Activated B cell treated with CpG ODN at 0.5 μM for 24 hours (primary cell): ENCODE measurements at regions of chr17 and their contacts with region 1.

Region 1: DNA sequence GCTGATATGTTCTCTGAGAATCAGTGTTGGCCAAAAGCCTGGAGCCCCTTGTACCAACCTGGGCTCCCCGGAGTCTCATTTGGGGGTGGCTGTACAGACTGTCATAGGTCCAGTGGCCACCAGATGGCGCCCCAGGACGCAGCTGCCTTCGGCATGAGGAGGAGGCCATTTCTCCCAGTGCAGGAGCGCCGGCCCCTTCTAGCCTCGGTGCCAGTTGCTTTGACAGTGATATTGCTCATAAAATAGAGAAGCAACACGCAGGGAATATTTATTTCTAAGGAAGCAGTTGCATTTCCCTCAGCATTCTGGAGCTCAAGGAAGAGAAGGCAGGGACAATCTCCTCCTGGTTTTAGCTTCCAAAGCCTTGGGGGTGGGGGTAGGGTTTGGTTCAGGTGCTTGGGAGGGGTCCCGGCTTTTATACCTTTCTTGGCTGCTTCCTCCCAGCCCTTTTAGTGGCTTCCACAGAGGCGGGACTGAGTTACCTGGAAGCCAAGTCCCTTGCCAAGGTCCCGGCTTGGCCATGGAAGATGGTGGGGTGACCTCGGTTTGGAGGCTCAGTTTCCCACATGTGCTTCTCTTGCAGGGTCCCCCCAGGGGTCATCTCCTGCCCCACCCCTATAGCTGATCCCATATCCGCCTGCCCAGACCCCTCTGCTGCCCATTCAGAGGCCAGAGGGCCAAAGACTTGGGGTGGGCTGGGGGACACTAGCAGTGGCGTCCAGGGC is 117.8 kb upstream of the CDC42EP4 start:
- DNase-seq: peak; percentile 80
- ATAC-seq: peak; percentile 97
- H3K4me3 Mint-ChIP-seq: no peak overlapping the region
- H3K27ac Mint-ChIP-seq: no peak overlapping the region
- H3K4me1 Mint-ChIP-seq: peaks cover 10% of the 10 kb centered on the region
- H3K27me3 Mint-ChIP-seq: peaks cover 2% of the 10 kb centered on the region
- CTCF ChIP-seq: peak; percentile 97

Region 2: GRCh38 chr17:73586921-73587602 is 157.5 kb after region 1 on chr17:
- CTCF ChIA-PET with region 1: interaction called, 7 read pairs
- POLR2A ChIA-PET with region 1: interaction called, 3 read pairs
- intact Hi-C with region 1: loop called (anchors 2 kb)
- DNase-seq: no peak
- ATAC-seq: no peak
- H3K4me3 Mint-ChIP-seq: peak overlapping the region; percentile 3
- H3K27ac Mint-ChIP-seq: peak overlapping the region; percentile 90
- H3K4me1 Mint-ChIP-seq: peaks cover 79% of the 10 kb centered on the region
- H3K27me3 Mint-ChIP-seq: no peaks in the 10 kb centered on the region
- CTCF ChIP-seq: no peak

Region 3: GRCh38 chr17:73710095-73710592 is 280.5 kb after region 1 on chr17:
- CTCF ChIA-PET with region 1: interaction called, 102 read pairs
- POLR2A ChIA-PET with region 1: no interaction called
- intact Hi-C with region 1: loop called (anchors 1 kb)
- DNase-seq: no peak
- ATAC-seq: peak; percentile 47
- H3K4me3 Mint-ChIP-seq: peak overlapping the region; percentile 1
- H3K27ac Mint-ChIP-seq: no peak overlapping the region
- H3K4me1 Mint-ChIP-seq: peaks cover 27% of the 10 kb centered on the region
- H3K27me3 Mint-ChIP-seq: peaks cover 10% of the 10 kb centered on the region
- CTCF ChIP-seq: peak; percentile 27

Region 4: DNA sequence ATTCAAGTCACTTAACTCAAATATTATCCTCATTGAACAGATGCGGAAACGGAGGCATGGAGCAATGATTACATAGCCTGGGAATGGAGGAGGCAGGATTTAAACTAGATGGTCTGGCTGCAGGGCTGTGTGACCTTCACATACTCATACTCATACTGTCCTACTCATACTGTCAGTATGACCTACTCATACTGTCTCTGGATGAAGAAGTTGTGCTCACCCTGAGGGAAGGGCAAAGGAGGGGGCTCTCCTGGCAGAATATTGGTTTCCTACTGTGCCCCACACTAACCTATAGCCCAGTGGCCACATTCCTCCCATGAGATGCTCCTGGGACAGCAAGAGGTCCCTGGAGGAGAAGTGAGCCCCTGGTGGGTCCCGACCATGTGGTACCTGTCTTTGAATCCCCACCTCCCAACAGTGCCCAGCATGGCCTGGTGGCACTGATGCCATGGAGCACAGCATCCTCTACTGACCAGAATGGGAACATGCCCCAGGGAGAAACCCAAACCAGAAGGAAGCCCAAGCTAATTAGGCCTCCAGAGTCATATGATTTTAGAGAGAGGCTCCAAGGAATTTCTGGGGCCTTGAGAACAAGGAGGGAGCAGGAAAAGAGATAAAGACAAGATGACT is 411.9 kb after region 1 on chr17:
- CTCF ChIA-PET with region 1: interaction called, 4 read pairs
- POLR2A ChIA-PET with region 1: no interaction called
- intact Hi-C with region 1: loop called (anchors 2 kb)
- DNase-seq: no peak
- ATAC-seq: no peak
- H3K4me3 Mint-ChIP-seq: no peak overlapping the region
- H3K27ac Mint-ChIP-seq: no peak overlapping the region
- H3K4me1 Mint-ChIP-seq: no peaks in the 10 kb centered on the region
- H3K27me3 Mint-ChIP-seq: peaks cover 9% of the 10 kb centered on the region
- CTCF ChIP-seq: no peak

Region 5: DNA sequence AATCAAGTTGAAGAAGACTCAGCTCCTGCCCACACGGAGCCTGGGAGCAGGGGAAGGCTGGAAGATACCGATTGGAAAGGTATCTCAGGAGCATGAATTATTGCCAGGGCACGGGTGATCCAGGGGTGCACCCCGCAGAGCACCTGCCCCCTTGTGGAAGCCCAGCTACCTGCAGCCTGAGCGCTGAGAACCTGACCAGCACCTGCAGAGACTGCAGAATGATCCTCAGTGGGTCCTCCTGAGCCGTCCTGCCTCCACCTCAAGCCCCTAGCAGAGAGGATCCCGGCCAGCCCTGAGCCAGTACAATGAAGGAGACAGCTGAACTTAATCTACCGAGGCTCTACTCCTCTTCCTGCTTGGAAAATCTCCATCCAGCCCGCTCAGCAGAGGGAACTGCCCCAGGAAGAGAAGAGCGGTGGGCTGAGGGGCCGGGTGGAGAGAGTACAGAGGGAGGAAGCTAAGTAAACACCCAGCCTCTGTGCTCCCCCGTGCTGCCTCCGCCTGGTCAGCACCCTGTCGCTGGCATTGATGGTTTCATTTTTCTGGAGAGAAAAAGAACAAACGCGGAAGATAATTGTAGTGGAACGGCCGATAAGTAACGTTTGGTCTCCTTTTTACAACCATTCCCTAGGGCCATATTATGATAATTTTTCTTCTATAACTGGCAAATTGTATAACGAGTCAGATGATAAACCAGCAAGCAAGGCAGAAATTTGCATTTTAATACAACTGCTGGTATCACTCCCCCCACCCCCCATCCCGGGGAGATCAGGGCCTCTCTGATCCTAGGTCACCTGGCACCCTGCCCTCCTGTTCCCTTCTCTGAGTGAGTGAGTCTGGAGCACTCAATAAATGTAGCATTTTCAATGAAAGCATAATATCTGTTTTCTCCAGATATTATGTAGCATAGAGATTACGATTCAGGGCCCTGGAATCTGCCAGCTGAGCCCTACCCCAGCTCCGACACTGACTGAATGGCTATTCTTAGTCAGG is 569.3 kb after region 1 on chr17:
- CTCF ChIA-PET with region 1: interaction called, 22 read pairs
- POLR2A ChIA-PET with region 1: no interaction called
- intact Hi-C with region 1: no loop called
- DNase-seq: peak; percentile 30
- ATAC-seq: peak; percentile 34
- H3K4me3 Mint-ChIP-seq: no peak overlapping the region
- H3K27ac Mint-ChIP-seq: no peak overlapping the region
- H3K4me1 Mint-ChIP-seq: no peaks in the 10 kb centered on the region
- H3K27me3 Mint-ChIP-seq: peaks cover 14% of the 10 kb centered on the region
- CTCF ChIP-seq: no peak

Region 6: DNA sequence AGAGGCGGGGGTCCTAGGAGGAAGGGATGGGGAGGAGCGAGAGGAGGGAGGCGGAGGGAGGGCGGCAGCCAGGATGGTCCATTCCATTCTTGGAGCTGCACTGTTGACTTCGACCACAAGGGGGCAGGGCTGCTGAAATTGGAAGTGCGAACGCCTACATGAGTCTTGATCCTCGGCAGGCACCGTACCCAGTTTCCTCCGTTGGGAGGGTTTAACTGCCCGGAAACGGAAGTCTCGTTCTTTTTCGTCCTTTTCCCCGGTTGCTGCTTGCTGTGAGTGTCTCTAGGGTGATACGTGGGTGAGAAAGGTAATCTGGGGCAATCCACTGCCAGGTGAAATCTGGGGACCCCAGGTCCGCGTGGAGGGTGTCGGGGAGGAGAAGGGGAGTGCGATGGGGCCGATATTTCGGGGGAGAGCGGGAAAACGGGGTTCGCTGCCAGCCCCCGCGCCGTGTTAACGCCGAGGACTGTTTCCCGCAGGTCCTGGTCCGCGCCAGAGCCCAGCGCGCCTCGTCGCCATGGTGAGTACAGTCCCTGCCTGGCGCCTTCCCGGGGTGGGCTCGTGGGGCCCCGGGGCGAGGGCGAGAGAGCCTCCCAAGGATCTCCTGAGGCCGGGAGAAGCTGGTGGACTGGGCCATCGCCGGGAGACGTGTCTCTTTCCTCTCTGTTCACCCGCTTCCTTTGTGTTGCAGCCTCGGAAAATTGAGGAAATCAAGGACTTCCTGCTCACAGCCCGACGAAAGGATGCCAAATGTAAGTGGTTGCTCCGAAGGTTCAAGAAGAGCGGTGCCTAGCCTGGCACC is 774.0 kb after region 1 on chr17 and contains the start of gene RPL38:
- CTCF ChIA-PET with region 1: interaction called, 4 read pairs
- POLR2A ChIA-PET with region 1: no interaction called
- intact Hi-C with region 1: loop called (anchors 1 kb)
- DNase-seq: peak; percentile 90
- ATAC-seq: peak; percentile 94
- H3K4me3 Mint-ChIP-seq: peak within 1 kb of the TSS; percentile 100
- H3K27ac Mint-ChIP-seq: peak within 1 kb of the TSS; percentile 98
- H3K4me1 Mint-ChIP-seq: peaks cover 47% of the 10 kb centered on the region
- H3K27me3 Mint-ChIP-seq: peaks cover 23% of the 10 kb centered on the region
- CTCF ChIP-seq: no peak
- total RNA-seq, gene RPL38: 1,330 and 1,676 TPM in 2 replicates